Panc1 (cell line): ENCODE measurements at regions of chr14 and their contacts with region 1.

Region 1: DNA sequence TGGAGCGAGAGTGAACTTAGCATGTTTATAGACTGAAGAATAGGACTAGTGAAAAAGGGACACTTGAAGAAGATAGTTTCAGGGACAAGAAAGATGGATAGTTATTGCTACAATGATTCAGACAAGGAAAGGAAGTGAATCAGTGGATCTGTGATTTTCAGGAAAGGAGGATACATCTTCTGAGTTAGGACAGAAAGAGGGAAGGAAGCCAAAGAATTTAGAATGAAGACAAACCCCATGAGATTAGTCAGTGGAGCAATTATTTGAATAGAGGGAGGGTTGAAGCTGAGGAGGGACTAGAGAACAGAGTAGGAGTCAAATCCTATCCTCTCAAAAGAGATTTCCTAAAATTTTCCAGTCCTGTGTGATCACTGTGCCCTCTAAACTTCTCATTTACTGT is 282.7 kb downstream of the AKAP6 start:
- DNase-seq: no peak
- ATAC-seq: no peak
- H3K4me3 ChIP-seq: no peak overlapping the region
- H3K27ac ChIP-seq: no peak overlapping the region
- H3K4me1 ChIP-seq: no peaks in the 10 kb centered on the region
- H3K27me3 ChIP-seq: no peaks in the 10 kb centered on the region
- CTCF ChIP-seq: no peak

Region 2: GRCh38 chr14:32950584-32950983 is 338.8 kb after region 1 on chr14:
- CTCF ChIA-PET with region 1: no interaction called
- POLR2A ChIA-PET with region 1: interaction called, 14 read pairs
- in situ Hi-C with region 1: no loop called
- intact Hi-C with region 1: no loop called
- DNase-seq: no peak
- ATAC-seq: no peak
- H3K4me3 ChIP-seq: no peak overlapping the region
- H3K27ac ChIP-seq: no peak overlapping the region
- H3K4me1 ChIP-seq: no peaks in the 10 kb centered on the region
- H3K27me3 ChIP-seq: no peaks in the 10 kb centered on the region
- CTCF ChIP-seq: no peak